ENCODE measurements at regions of chr10 and their contacts with region 1.

Region 1: GRCh38 chr10:58755677-58756076 is 243.0 kb downstream of the BICC1 start:
- DNase-seq: peak; percentile 83
- H3K4me3 Mint-ChIP-seq: peak overlapping the region; percentile 75
- H3K27ac Mint-ChIP-seq: peak overlapping the region; percentile 90
- H3K4me1 Mint-ChIP-seq: peaks cover 14% of the 10 kb centered on the region
- H3K27me3 Mint-ChIP-seq: no peaks in the 10 kb centered on the region
- CTCF ChIP-seq: no peak

Region 2: DNA sequence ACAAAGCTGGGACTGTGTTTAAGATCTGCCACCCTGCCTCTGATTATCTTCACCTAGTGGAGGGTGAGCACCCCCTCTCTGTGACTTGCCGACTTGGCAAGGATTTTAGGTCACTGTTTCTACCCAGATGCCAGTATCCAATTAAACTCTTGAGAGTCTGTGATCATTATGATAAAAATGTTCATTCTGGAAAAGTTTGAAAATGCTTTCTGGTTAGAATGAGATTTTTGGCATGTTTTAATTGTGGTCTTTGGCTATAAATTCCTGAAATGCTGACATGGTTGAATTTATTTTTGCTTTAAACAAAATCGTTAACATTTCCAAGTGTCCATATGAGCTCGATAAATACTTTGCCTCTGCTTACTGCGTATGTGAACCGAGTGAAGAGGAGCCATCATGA is 21.6 kb before region 1 on chr10:
- CTCF ChIA-PET with region 1: interaction called, 3 read pairs
- POLR2A ChIA-PET with region 1: interaction called, 3 read pairs
- intact Hi-C with region 1: loop called (anchors 2 kb)
- DNase-seq: no peak
- H3K4me3 Mint-ChIP-seq: no peak overlapping the region
- H3K27ac Mint-ChIP-seq: no peak overlapping the region
- H3K4me1 Mint-ChIP-seq: no peaks in the 10 kb centered on the region
- H3K27me3 Mint-ChIP-seq: no peaks in the 10 kb centered on the region
- CTCF ChIP-seq: no peak

Measured in MCF 10A (cell line).